CD4-positive, alpha-beta T cell (primary cell): ENCODE measurements at regions of chr16 and their contacts with region 1.

Region 1: DNA sequence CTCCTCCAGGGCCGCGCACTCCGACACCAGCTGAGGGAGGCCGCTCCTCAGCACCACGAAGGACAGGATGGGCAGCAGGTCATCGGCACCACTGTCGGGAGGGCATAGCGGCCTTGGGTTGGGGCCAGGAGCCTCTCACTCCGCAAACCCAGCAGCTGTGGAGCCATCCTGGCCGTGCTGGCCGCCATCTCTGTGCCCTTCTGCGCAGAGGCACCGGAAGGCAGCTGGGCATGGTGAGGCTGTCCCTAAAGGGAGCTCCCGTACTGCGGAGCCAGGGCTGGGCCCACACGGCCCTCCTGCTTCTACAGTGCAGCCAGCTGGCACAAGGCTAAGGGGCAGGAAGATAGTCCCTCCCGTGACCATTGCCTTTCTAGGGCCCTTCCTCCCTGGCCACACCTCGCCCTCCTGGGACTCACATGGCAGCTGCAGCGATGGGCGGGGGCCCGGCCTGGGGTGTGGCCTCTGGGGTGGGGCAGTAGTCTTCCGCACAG is 7.0 kb upstream of the SPATA2L start:
- DNase-seq: no peak
- ATAC-seq: no peak
- H3K4me3 ChIP-seq: no peak overlapping the region
- H3K4me3 Mint-ChIP-seq: no peak overlapping the region
- H3K27ac ChIP-seq: no peak overlapping the region
- H3K27ac Mint-ChIP-seq: no peak overlapping the region
- H3K4me1 ChIP-seq: peaks cover 31% of the 10 kb centered on the region
- H3K4me1 Mint-ChIP-seq: peaks cover 6% of the 10 kb centered on the region
- H3K27me3 ChIP-seq: peaks cover 0 to 2% of the 10 kb centered on the region in 2 experiments
- H3K27me3 Mint-ChIP-seq: no peaks in the 10 kb centered on the region
- CTCF ChIP-seq: no peak

Region 2: DNA sequence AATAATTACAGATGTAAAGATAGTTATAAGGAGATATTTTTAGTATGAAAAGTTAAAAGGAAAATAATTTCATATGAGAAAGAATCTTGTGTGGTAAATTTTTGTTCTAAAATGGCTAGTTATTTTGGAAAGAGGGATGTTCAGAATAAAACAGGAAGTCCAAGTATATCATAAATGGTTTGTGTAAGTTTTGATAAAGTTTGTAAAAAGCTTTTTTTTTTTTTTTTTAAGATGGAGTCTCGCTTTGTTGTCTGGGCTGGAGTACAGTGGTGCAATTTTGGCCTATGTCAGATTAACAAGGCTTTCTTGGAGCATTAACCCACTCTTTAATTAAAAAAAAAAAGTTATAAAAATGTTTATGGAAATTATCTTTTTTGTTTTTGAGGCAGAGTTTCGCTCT is 30.2 kb before region 1 on chr16:
- CTCF ChIA-PET with region 1: no interaction called
- POLR2A ChIA-PET with region 1: no interaction called
- intact Hi-C with region 1: no loop called
- DNase-seq: no peak
- ATAC-seq: no peak
- H3K4me3 ChIP-seq: no peak overlapping the region
- H3K4me3 Mint-ChIP-seq: no peak overlapping the region
- H3K27ac ChIP-seq: no peak overlapping the region
- H3K27ac Mint-ChIP-seq: no peak overlapping the region
- H3K4me1 ChIP-seq: no peaks in the 10 kb centered on the region
- H3K4me1 Mint-ChIP-seq: no peaks in the 10 kb centered on the region
- H3K27me3 ChIP-seq: no peaks in the 10 kb centered on the region
- H3K27me3 Mint-ChIP-seq: no peaks in the 10 kb centered on the region
- CTCF ChIP-seq: no peak

Region 3: GRCh38 chr16:89737341-89738071 is 29.0 kb after region 1 on chr16:
- CTCF ChIA-PET with region 1: interaction called, 6 read pairs
- POLR2A ChIA-PET with region 1: interaction called, 13 read pairs
- intact Hi-C with region 1: loop called in 1 of 2 experiments (anchors 1 kb)
- DNase-seq: peak in 13 of 14 experiments; percentile 28 to 86 (median 54)
- ATAC-seq: peak; percentile 79
- H3K4me3 ChIP-seq: no peak overlapping the region
- H3K4me3 Mint-ChIP-seq: peak overlapping the region; percentile 69
- H3K27ac ChIP-seq: no peak overlapping the region
- H3K27ac Mint-ChIP-seq: peak overlapping the region; percentile 80
- H3K4me1 ChIP-seq: peaks cover 69% of the 10 kb centered on the region
- H3K4me1 Mint-ChIP-seq: peaks cover 44% of the 10 kb centered on the region
- H3K27me3 ChIP-seq: no peaks in the 10 kb centered on the region
- H3K27me3 Mint-ChIP-seq: no peaks in the 10 kb centered on the region
- CTCF ChIP-seq: no peak

Region 4: DNA sequence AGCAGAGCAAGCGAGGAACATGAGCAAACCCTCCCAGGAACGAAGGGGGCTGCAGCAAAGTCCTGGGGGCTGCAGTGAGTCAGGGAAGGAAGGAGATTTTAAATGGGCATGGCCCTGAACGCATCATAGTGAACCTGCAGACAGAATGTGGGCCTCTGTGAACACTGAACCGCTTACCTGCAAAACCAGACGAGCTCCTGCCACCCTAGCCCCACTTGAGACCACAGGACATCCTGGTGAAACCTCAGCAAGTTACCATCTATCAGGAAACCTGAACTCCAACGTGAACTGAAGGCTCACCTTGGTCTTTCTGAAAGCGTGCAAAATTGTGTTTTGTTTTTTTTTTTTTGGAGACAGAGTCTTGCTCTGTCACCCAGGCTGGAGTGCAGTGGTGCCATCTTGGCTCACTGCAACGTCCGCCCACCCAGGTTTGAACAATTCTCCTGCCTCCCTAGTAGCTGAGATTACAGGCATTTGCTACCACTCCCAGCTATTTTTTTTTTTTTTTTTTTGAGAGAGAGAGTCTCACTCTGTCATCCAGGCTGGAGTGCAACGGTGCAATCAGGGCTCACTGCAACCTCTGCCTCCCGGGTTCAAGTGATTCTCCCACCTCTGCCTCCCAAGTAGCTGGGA is 77.2 kb after region 1 on chr16:
- CTCF ChIA-PET with region 1: interaction called, 10 read pairs
- POLR2A ChIA-PET with region 1: interaction called, 4 read pairs
- intact Hi-C with region 1: no loop called
- DNase-seq: peak in 13 of 14 experiments; percentile 21 to 84 (median 37)
- ATAC-seq: peak; percentile 77
- H3K4me3 ChIP-seq: no peak overlapping the region
- H3K4me3 Mint-ChIP-seq: peak overlapping the region; percentile 57
- H3K27ac ChIP-seq: no peak overlapping the region
- H3K27ac Mint-ChIP-seq: peak overlapping the region; percentile 69
- H3K4me1 ChIP-seq: peaks cover 37% of the 10 kb centered on the region
- H3K4me1 Mint-ChIP-seq: peaks cover 31% of the 10 kb centered on the region
- H3K27me3 ChIP-seq: no peaks in the 10 kb centered on the region
- H3K27me3 Mint-ChIP-seq: no peaks in the 10 kb centered on the region
- CTCF ChIP-seq: no peak

Region 5: GRCh38 chr16:89860747-89861304 is 152.3 kb after region 1 on chr16:
- CTCF ChIA-PET with region 1: interaction called, 73 read pairs
- POLR2A ChIA-PET with region 1: interaction called, 14 read pairs
- intact Hi-C with region 1: loop called (anchors 1 kb)
- DNase-seq: peak; percentile 56 to 85 (median 70)
- ATAC-seq: peak; percentile 85
- H3K4me3 ChIP-seq: no peak overlapping the region
- H3K4me3 Mint-ChIP-seq: peak overlapping the region; percentile 21
- H3K27ac ChIP-seq: no peak overlapping the region
- H3K27ac Mint-ChIP-seq: peak overlapping the region; percentile 57
- H3K4me1 ChIP-seq: peaks cover 42% of the 10 kb centered on the region
- H3K4me1 Mint-ChIP-seq: peaks cover 29% of the 10 kb centered on the region
- H3K27me3 ChIP-seq: no peaks in the 10 kb centered on the region
- H3K27me3 Mint-ChIP-seq: no peaks in the 10 kb centered on the region
- CTCF ChIP-seq: peak; percentile 98